Activated T-helper 2 cell treated with anti-CD3 and anti-CD28 coated beads, Interferon-gamma antibody, Interleukin-2, Interleukin-4, amounts not matched to agents 10 μg/mL and 5 μg/mL and 100 μg/mL, durations not matched to agents 14 hours and 24 hours and 36 hours (primary cell): ENCODE measurements at regions of chr13 and their contacts with region 1.

Region 1: GRCh38 chr13:97432917-97433726 is 847 bp upstream of the RAP2A start:
- DNase-seq: peak; percentile 99
- H3K4me3 Mint-ChIP-seq: peak overlapping the region; percentile 98
- H3K27ac Mint-ChIP-seq: peak overlapping the region; percentile 99
- H3K4me1 Mint-ChIP-seq: peaks cover 34% of the 10 kb centered on the region
- H3K27me3 Mint-ChIP-seq: peaks cover 9% of the 10 kb centered on the region

Region 2: GRCh38 chr13:97100821-97101220 is 332.3 kb before region 1 on chr13:
- intact Hi-C with region 1: loop called (anchors 2 kb)
- DNase-seq: no peak
- H3K4me3 Mint-ChIP-seq: no peak overlapping the region
- H3K27ac Mint-ChIP-seq: no peak overlapping the region
- H3K4me1 Mint-ChIP-seq: peaks cover 20% of the 10 kb centered on the region
- H3K27me3 Mint-ChIP-seq: peaks cover 6% of the 10 kb centered on the region

Region 3: DNA sequence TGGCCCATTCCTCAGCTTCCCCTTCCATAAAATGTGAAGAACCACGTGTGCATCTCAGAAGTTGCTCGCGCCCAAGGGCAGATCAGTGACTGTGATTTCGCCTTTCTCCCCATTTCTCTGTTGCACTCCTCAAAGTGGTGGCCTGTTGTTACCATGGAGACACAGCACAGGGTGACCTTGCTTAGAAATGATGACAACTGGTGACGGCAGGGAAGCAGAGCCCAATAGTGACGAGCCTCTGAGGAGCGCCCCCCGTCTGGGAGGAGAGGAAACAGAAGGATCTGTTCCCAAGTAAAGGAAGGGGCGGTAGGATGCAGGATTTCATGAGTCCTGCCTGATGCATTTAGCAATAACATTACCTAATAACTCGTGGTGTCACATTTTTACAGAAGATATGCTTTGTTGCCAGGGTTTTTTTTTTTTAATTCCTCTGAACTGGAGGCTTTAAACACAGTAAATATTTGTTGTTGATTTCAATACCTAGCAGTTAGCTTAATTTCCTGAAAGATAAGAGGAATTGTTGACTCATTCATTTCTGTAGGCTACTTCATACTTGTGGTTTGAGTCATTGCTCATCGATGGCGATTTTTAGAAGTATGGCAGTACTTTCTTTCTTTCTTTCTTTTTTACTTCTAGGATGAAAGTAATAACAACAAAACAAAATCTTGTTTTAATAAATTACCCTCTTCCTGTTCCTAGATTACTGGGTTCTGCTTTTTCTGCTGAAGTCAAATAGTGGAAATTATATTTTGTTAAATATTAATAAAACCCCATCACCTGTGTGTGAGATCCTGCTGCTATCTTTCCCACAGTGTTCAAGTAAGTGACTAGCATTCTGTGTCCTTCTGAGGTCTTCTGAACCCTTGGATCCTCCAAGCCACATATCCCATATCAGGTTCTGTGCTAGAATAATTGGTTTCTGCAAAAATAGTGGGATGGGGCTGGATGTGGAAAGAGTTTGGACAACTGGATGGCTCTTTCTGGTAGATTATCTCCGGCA is 175.0 kb before region 1 on chr13:
- intact Hi-C with region 1: loop called (anchors 1 kb)
- DNase-seq: no peak
- H3K4me3 Mint-ChIP-seq: peak overlapping the region; percentile 41
- H3K27ac Mint-ChIP-seq: peak overlapping the region; percentile 93
- H3K4me1 Mint-ChIP-seq: peaks cover 80% of the 10 kb centered on the region
- H3K27me3 Mint-ChIP-seq: no peaks in the 10 kb centered on the region

Region 4: GRCh38 chr13:97459215-97459777 is 26.2 kb after region 1 on chr13:
- intact Hi-C with region 1: loop called (anchors 2 kb)
- DNase-seq: no peak
- H3K4me3 Mint-ChIP-seq: no peak overlapping the region
- H3K27ac Mint-ChIP-seq: no peak overlapping the region
- H3K4me1 Mint-ChIP-seq: peaks cover 34% of the 10 kb centered on the region
- H3K27me3 Mint-ChIP-seq: no peaks in the 10 kb centered on the region

Region 5: GRCh38 chr13:97975848-97976609 is 542.9 kb after region 1 on chr13:
- intact Hi-C with region 1: loop called (anchors 1 kb)
- DNase-seq: peak; percentile 87
- H3K4me3 Mint-ChIP-seq: peak overlapping the region; percentile 91
- H3K27ac Mint-ChIP-seq: peak overlapping the region; percentile 99
- H3K4me1 Mint-ChIP-seq: peaks cover 27% of the 10 kb centered on the region
- H3K27me3 Mint-ChIP-seq: peaks cover 7% of the 10 kb centered on the region

Region 6: GRCh38 chr13:98570929-98571372 is 1137.8 kb after region 1 on chr13:
- intact Hi-C with region 1: loop called (anchors 5 kb)
- DNase-seq: peak; percentile 53
- H3K4me3 Mint-ChIP-seq: peak overlapping the region; percentile 73
- H3K27ac Mint-ChIP-seq: peak overlapping the region; percentile 83
- H3K4me1 Mint-ChIP-seq: peaks cover 83% of the 10 kb centered on the region
- H3K27me3 Mint-ChIP-seq: no peaks in the 10 kb centered on the region